Breast epithelium (tissue), 4 donors: ENCODE measurements at regions of chr10 and their contacts with region 1.

Region 1: DNA sequence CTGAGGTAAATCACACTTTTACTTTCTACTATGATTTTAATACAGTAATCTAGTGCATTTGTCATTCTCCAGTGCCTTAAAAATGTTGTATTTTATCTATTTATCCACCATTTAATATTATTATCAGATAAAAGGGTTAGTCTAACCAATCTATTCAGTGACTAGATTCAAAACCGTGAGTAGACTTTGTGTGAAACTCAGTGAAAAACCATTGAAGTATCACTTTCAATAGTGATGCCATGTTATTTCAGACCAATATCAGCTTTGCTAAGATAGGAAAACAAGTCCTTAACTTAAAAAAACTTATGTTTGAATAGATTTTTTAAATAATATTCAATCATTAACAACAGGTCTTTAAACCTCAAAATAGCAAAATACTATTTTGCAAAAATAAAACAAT is 1628.7 kb downstream of the REEP3 start:
- DNase-seq: no peak
- H3K4me3 ChIP-seq: no peak overlapping the region
- H3K27ac ChIP-seq: no peak overlapping the region
- H3K4me1 ChIP-seq: no peaks in the 10 kb centered on the region
- H3K27me3 ChIP-seq: no peaks in the 10 kb centered on the region
- CTCF ChIP-seq: no peak
- POLR2A ChIP-seq: no peak

Region 2: GRCh38 chr10:64175271-64175962 is 974.5 kb before region 1 on chr10:
- intact Hi-C with region 1: loop called (anchors 5 kb)
- DNase-seq: no peak
- H3K4me3 ChIP-seq: no peak overlapping the region
- H3K27ac ChIP-seq: no peak overlapping the region
- H3K4me1 ChIP-seq: no peaks in the 10 kb centered on the region
- H3K27me3 ChIP-seq: no peaks in the 10 kb centered on the region
- CTCF ChIP-seq: no peak
- POLR2A ChIP-seq: no peak

Region 3: GRCh38 chr10:65040796-65041195 is 109.1 kb before region 1 on chr10:
- intact Hi-C with region 1: no loop called
- DNase-seq: no peak
- H3K4me3 ChIP-seq: no peak overlapping the region
- H3K27ac ChIP-seq: no peak overlapping the region
- H3K4me1 ChIP-seq: no peaks in the 10 kb centered on the region
- H3K27me3 ChIP-seq: no peaks in the 10 kb centered on the region
- CTCF ChIP-seq: no peak
- POLR2A ChIP-seq: no peak

Region 4: GRCh38 chr10:65325913-65326312 is 176.0 kb after region 1 on chr10:
- intact Hi-C with region 1: no loop called
- DNase-seq: no peak
- H3K4me3 ChIP-seq: no peak overlapping the region
- H3K27ac ChIP-seq: no peak overlapping the region
- H3K4me1 ChIP-seq: no peaks in the 10 kb centered on the region
- H3K27me3 ChIP-seq: no peaks in the 10 kb centered on the region
- CTCF ChIP-seq: no peak
- POLR2A ChIP-seq: no peak

Region 5: GRCh38 chr10:65684896-65685295 is 535.0 kb after region 1 on chr10:
- intact Hi-C with region 1: no loop called
- DNase-seq: no peak
- H3K4me3 ChIP-seq: no peak overlapping the region
- H3K27ac ChIP-seq: no peak overlapping the region
- H3K4me1 ChIP-seq: no peaks in the 10 kb centered on the region
- H3K27me3 ChIP-seq: no peaks in the 10 kb centered on the region
- CTCF ChIP-seq: no peak
- POLR2A ChIP-seq: no peak